Sciatic nerve (tissue), 2 donors: ENCODE measurements at regions of chr20 and their contacts with region 1.

Region 1: DNA sequence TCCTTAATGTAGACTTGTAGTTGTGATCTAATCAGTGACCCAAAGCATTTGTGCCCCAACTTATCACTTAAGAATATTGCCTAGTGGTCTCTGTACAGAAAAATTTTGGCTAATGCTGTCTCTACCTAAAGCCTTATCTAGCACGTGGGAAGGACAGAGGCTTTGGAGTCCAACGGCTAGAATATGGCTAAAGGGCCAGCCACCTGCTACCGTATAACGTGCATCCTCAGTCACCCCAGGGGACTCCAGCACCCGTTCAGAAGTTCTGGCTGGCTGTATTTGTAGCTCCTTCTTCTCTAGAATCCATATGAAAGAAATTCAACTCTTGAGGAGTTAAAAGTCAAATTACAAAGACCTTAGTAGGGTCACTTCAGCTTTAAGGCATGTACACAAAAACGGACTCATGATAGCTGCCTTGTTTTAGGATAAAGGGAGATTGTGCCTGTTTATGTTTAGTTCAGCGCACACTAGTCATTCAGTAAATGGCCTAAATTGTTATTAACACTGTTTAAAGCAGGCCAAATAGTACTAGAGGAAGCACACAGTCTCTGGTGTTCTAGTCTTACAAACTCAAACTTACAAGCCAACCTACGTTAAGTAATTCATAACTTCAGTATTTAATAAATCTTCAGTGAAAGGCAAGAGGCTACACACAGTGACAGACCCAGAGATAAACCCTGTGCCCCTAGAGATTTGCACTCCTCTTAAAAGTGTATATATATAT is 407.5 kb upstream of the PLCB4 start:
- DNase-seq: no peak
- ATAC-seq: peak; percentile 34

Region 2: GRCh38 chr20:8678098-8678776 is 16.8 kb after region 1 on chr20:
- intact Hi-C with region 1: loop called (anchors 1 kb)
- DNase-seq: no peak
- ATAC-seq: no peak

Region 3: DNA sequence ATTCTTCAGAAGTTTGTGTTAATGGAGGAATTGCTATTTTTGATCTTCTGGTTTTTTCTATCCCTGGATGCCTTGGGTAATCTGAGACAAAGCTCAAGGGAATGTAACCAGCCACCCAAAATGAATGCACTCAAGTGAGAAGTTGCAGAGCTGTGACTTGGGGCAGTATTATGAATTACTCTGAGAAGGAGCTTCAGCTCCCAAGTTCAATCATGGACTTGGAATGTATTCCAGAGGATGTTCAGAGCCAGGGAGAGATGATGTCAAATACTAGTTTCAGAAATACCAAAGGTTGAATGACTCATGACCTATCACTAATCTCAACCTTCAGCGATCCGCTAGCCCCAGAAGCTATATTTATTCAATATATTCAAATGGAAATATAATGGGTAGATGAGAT is 32.3 kb after region 1 on chr20:
- intact Hi-C with region 1: no loop called
- DNase-seq: no peak
- ATAC-seq: peak; percentile 45